Common myeloid progenitor, CD34-positive (primary cell): ENCODE measurements at regions of chr5 and their contacts with region 1.

Region 1: GRCh38 chr5:32232441-32233219 is 58.5 kb upstream of the GOLPH3 start:
- DNase-seq: peak; percentile 87 to 95 (median 93)
- H3K4me3 ChIP-seq: peak overlapping the region in 1 of 7 experiments; percentile 13
- H3K27ac ChIP-seq: peak overlapping the region in 1 of 2 experiments; percentile 31
- H3K4me1 ChIP-seq: peaks cover 6 to 50% (median 36%) of the 10 kb centered on the region in 4 experiments
- H3K27me3 ChIP-seq: no peaks in the 10 kb centered on the region

Region 2: GRCh38 chr5:31965227-31965626 is 267.4 kb before region 1 on chr5:
- CTCF ChIA-PET with region 1: no interaction called
- POLR2A ChIA-PET with region 1: no interaction called
- DNase-seq: no peak
- H3K4me3 ChIP-seq: no peak overlapping the region
- H3K27ac ChIP-seq: no peak overlapping the region
- H3K4me1 ChIP-seq: peaks cover 0 to 15% (median 11%) of the 10 kb centered on the region in 4 experiments
- H3K27me3 ChIP-seq: no peaks in the 10 kb centered on the region

Region 3: DNA sequence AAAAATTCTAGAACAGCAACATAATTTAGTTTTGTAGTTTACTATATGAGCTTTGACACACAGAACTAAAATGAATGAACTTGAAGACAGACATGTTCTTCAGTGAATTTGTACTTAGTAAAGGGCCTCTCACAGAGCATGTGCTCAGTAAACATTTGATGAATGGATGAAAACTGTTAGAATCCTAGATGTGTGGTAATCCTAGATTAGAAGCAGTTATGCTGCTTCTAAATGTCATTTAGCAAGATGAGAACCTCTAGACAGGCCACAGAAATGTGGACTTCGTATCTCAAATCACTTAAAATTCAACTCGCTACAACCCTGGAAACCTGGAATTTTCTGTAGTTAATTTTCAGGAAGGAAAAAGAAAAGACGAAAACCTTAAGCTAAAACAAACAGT is 67.0 kb before region 1 on chr5:
- CTCF ChIA-PET with region 1: interaction called, 17 read pairs
- POLR2A ChIA-PET with region 1: interaction called, 5 read pairs
- DNase-seq: no peak
- H3K4me3 ChIP-seq: no peak overlapping the region
- H3K27ac ChIP-seq: peak overlapping the region in 1 of 2 experiments; percentile 35
- H3K4me1 ChIP-seq: peaks cover 2 to 44% (median 18%) of the 10 kb centered on the region in 4 experiments
- H3K27me3 ChIP-seq: no peaks in the 10 kb centered on the region

Region 4: GRCh38 chr5:32174011-32174870 is 58.4 kb before region 1 on chr5 and contains the start of gene GOLPH3:
- CTCF ChIA-PET with region 1: interaction called, 9 read pairs
- POLR2A ChIA-PET with region 1: interaction called, 11 read pairs
- DNase-seq: peak; percentile 91 to 97 (median 95)
- H3K4me3 ChIP-seq: peak within 1 kb of the TSS; percentile 74 to 100 (median 94)
- H3K27ac ChIP-seq: peak within 1 kb of the TSS; percentile 94 to 96
- H3K4me1 ChIP-seq: peaks cover 6 to 42% (median 28%) of the 10 kb centered on the region in 4 experiments
- H3K27me3 ChIP-seq: no peaks in the 10 kb centered on the region

Region 5: GRCh38 chr5:32217886-32218396 is 14.7 kb before region 1 on chr5:
- CTCF ChIA-PET with region 1: interaction called, 12 read pairs
- POLR2A ChIA-PET with region 1: no interaction called
- DNase-seq: peak; percentile 45 to 78 (median 75)
- H3K4me3 ChIP-seq: no peak overlapping the region
- H3K27ac ChIP-seq: no peak overlapping the region
- H3K4me1 ChIP-seq: peaks cover 7 to 24% (median 12%) of the 10 kb centered on the region in 4 experiments
- H3K27me3 ChIP-seq: no peaks in the 10 kb centered on the region

Region 6: GRCh38 chr5:32329308-32329834 is 96.7 kb after region 1 on chr5:
- CTCF ChIA-PET with region 1: interaction called, 97 read pairs
- POLR2A ChIA-PET with region 1: interaction called, 3 read pairs
- DNase-seq: peak; percentile 51 to 63 (median 56)
- H3K4me3 ChIP-seq: no peak overlapping the region
- H3K27ac ChIP-seq: no peak overlapping the region
- H3K4me1 ChIP-seq: no peaks in the 10 kb centered on the region
- H3K27me3 ChIP-seq: no peaks in the 10 kb centered on the region